ENCODE measurements at regions of chr10 and their contacts with region 1.

Region 1: DNA sequence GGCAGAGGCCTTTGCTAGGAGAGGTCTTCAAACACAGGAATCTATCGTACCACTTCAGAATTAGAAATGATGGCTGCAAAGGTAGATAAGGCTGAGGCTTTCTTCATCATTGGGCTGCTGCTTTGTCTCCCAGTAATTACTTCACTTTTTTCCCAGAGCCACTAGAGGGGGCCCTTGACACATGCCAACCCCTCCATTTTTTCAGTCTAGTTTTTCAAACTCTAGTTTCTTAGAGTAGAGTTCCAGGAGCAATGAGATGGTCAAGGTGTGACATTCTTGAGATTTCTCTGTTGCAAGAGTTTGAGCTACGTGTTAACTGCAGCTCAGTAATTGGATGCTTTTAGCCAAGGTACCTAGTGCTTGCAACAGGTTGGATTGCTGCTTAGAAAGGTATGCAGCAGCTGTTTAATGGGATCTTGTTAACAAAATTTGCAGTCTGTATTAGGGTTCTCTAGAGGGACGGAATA is 33.8 kb upstream of the RBM20 start:
- DNase-seq: peak; percentile 87
- H3K4me3 Mint-ChIP-seq: no peak overlapping the region
- H3K27ac Mint-ChIP-seq: no peak overlapping the region
- H3K4me1 Mint-ChIP-seq: peaks cover 39% of the 10 kb centered on the region
- H3K27me3 Mint-ChIP-seq: peaks cover 3% of the 10 kb centered on the region

Region 2: GRCh38 chr10:110671788-110672579 is 61.6 kb after region 1 on chr10:
- intact Hi-C with region 1: loop called (anchors 1 kb)
- DNase-seq: peak; percentile 88
- H3K4me3 Mint-ChIP-seq: peak overlapping the region; percentile 87
- H3K27ac Mint-ChIP-seq: no peak overlapping the region
- H3K4me1 Mint-ChIP-seq: peaks cover 2% of the 10 kb centered on the region
- H3K27me3 Mint-ChIP-seq: peaks cover 64% of the 10 kb centered on the region

Region 3: GRCh38 chr10:110724116-110724921 is 114.0 kb after region 1 on chr10:
- intact Hi-C with region 1: loop called (anchors 5 kb)
- DNase-seq: peak; percentile 63
- H3K4me3 Mint-ChIP-seq: peak overlapping the region; percentile 45
- H3K27ac Mint-ChIP-seq: no peak overlapping the region
- H3K4me1 Mint-ChIP-seq: peaks cover 17% of the 10 kb centered on the region
- H3K27me3 Mint-ChIP-seq: no peaks in the 10 kb centered on the region

Region 4: GRCh38 chr10:110893559-110894179 is 283.3 kb after region 1 on chr10:
- intact Hi-C with region 1: loop called (anchors 1 kb)
- DNase-seq: peak; percentile 61
- H3K4me3 Mint-ChIP-seq: no peak overlapping the region
- H3K27ac Mint-ChIP-seq: no peak overlapping the region
- H3K4me1 Mint-ChIP-seq: peaks cover 9% of the 10 kb centered on the region
- H3K27me3 Mint-ChIP-seq: no peaks in the 10 kb centered on the region

Region 5: GRCh38 chr10:111598436-111599059 is 988.2 kb after region 1 on chr10:
- intact Hi-C with region 1: loop called (anchors 10 kb)
- DNase-seq: peak; percentile 81
- H3K4me3 Mint-ChIP-seq: no peak overlapping the region
- H3K27ac Mint-ChIP-seq: no peak overlapping the region
- H3K4me1 Mint-ChIP-seq: no peaks in the 10 kb centered on the region
- H3K27me3 Mint-ChIP-seq: no peaks in the 10 kb centered on the region